ENCODE measurements at regions of chr13 and their contacts with region 1.

Region 1: GRCh38 chr13:20945952-20946383 is 43.4 kb upstream of the XPO4 start:
- DNase-seq: no peak
- H3K4me3 Mint-ChIP-seq: no peak overlapping the region
- H3K27ac Mint-ChIP-seq: no peak overlapping the region
- H3K4me1 Mint-ChIP-seq: peaks cover 4% of the 10 kb centered on the region
- H3K27me3 Mint-ChIP-seq: peaks cover 40% of the 10 kb centered on the region

Region 2: DNA sequence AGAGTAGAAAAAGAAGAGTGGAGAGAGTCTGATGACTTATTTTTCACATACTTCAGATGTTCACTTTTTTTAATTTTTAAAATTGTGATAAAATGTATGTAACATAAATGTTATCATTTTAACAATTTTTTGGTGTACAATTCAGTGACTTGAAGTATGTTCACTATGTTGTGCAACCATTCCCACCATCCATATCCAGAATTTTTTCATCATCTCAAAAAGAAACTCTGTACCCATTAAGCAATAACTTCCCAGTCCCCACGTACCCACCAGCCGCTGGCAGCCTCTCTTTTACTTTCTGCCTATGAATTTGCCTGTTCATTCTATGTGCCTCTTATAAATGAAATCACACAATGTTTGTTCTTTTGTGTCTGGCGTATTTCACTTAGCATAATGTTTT is 187.1 kb after region 1 on chr13:
- intact Hi-C with region 1: loop called (anchors 2 kb)
- DNase-seq: no peak
- H3K4me3 Mint-ChIP-seq: no peak overlapping the region
- H3K27ac Mint-ChIP-seq: no peak overlapping the region
- H3K4me1 Mint-ChIP-seq: no peaks in the 10 kb centered on the region
- H3K27me3 Mint-ChIP-seq: peaks cover 18% of the 10 kb centered on the region

Region 3: DNA sequence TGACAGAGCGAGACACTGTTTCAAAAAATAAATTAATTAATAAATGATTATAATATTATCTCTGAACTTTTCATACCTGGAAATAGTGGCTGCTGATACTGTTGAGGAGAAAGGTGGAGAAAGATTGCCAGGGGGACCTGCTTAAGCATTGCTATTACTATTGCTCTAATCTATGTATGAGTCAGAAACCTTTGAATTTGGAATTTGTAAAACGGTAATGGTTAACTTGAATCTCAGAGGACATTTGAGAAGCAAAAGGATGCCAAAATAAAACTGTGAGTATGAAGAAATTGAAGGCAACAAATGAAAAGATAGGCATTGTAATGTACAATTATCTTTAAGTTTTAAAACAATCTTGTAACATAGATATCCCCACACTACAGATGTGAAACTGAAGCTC is 235.7 kb after region 1 on chr13:
- intact Hi-C with region 1: loop called (anchors 2 kb)
- DNase-seq: no peak
- H3K4me3 Mint-ChIP-seq: no peak overlapping the region
- H3K27ac Mint-ChIP-seq: no peak overlapping the region
- H3K4me1 Mint-ChIP-seq: peaks cover 2% of the 10 kb centered on the region
- H3K27me3 Mint-ChIP-seq: no peaks in the 10 kb centered on the region

Region 4: DNA sequence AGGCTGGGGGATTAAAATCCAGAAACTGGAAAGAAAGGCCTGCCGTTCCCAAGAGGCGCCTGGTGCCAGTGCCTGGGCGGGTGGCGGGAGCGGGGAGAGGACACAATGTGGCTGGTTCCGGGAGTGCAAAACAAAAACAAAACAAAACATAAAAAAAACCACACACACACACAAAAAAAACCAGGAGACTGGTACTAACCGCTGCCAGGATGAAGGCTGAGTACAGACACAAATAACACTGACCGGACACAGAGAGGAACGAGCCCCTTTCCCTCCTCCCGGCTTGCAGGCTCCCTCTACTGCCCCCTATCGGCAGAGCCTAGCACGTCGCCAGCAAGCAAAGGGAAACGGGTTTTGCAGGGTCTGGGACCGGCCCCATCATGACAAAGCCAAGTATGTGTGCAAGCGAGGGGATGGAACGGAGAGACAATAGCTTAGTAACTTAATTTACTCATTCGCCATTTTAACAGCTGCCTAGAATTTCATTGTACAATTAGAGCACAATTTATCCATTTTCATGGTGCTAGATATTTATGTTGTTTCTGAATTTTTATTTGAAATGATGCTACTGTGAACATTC is 531.0 kb after region 1 on chr13:
- intact Hi-C with region 1: loop called (anchors 2 kb)
- DNase-seq: peak; percentile 72
- H3K4me3 Mint-ChIP-seq: peak overlapping the region; percentile 78
- H3K27ac Mint-ChIP-seq: peak overlapping the region; percentile 26
- H3K4me1 Mint-ChIP-seq: peaks cover 10% of the 10 kb centered on the region
- H3K27me3 Mint-ChIP-seq: peaks cover 3% of the 10 kb centered on the region